Endothelial cell of umbilical vein (primary cell): ENCODE measurements at regions of chr11 and their contacts with region 1.

Region 1: DNA sequence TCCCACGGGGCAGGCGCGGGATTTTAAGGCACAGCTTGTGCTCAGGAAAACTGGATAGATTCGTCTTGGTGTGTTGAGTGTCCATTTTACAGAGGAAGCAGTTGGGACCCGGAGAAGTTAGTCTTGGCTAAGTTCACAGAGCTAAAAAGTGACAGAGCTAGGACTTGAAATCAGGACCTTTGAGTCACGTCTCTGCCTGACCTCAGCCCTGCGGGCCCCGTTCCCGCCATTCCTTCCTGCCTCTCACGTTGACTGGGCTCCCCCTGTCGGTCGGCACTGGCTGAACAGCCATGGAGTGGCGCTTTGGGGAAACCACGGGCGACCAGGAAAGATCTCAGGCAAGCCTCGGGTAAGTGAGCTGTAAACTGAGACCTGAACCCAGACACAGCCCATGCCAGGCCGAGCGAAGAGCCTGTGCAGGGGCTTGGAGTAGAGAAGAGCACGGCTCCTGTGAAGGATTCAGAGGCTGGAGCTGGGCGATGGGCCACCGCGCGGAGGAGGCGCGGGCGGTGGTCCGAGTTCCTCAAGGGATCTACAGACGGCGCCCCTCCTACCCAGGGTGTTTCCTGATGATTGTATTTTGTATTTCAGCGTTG is 54.1 kb downstream of the WNT11 start:
- DNase-seq: peak; percentile 77
- H3K4me3 ChIP-seq: peak overlapping the region in 2 of 3 experiments; percentile 25 to 27
- H3K27ac ChIP-seq: no peak overlapping the region
- H3K4me1 ChIP-seq: no peaks in the 10 kb centered on the region
- H3K27me3 ChIP-seq: no peaks in the 10 kb centered on the region
- CTCF ChIP-seq: peak; percentile 95 to 99
- POLR2A ChIP-seq: no peak

Region 2: DNA sequence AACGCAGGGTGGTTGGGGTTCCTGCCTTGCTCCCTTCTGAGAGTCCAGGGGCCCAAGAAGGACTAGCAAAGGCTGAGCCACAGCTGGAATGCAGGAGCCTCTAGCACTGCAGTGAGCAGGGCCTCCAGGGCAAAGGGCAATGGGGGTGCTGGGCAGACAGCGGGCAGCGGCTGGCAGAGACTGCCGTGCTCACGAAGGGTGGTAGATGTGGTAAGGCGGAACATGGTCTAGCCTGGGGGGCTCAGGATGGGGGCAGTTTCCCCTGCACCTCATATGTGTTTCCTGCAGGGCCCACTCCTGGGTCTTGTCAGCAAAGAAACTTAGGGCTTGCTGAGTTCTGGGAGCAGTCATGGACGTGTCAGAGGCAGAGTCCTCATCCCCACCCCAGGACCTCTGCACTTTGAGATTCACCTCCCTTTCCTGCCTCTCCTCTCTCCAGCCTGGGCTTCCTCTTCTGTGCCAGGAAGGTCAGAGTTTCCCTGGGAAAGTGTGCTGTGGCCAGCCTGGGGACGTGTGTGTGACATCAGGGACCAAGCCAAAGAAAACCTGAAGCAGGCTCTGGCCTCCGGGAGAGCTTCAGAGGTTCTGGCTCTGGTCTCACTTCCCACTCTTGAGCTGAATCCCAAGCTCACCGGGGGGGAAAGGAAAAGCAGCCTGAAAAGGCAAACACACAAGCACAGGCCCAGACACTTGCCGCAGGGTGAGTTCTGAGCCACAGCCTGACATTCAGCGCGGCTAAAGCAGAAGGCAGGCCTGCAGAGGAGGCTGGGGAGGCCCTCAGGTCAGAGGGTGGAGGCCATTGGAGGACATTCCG is 430.1 kb before region 1 on chr11:
- CTCF ChIA-PET with region 1: interaction called, 33 read pairs
- POLR2A ChIA-PET with region 1: no interaction called
- dilution Hi-C with region 1: no loop called
- intact Hi-C with region 1: loop called (anchors 2 kb)
- DNase-seq: no peak
- H3K4me3 ChIP-seq: no peak overlapping the region
- H3K27ac ChIP-seq: no peak overlapping the region
- H3K4me1 ChIP-seq: no peaks in the 10 kb centered on the region
- H3K27me3 ChIP-seq: peaks cover 0 to 2% of the 10 kb centered on the region in 2 experiments
- CTCF ChIP-seq: no peak
- POLR2A ChIP-seq: no peak

Region 3: GRCh38 chr11:75855191-75855590 is 297.0 kb before region 1 on chr11:
- CTCF ChIA-PET with region 1: no interaction called
- POLR2A ChIA-PET with region 1: no interaction called
- dilution Hi-C with region 1: no loop called
- intact Hi-C with region 1: no loop called
- DNase-seq: no peak
- H3K4me3 ChIP-seq: no peak overlapping the region
- H3K27ac ChIP-seq: no peak overlapping the region
- H3K4me1 ChIP-seq: peaks cover 20% of the 10 kb centered on the region
- H3K27me3 ChIP-seq: no peaks in the 10 kb centered on the region
- CTCF ChIP-seq: no peak
- POLR2A ChIP-seq: no peak

Region 4: GRCh38 chr11:75867775-75868374 is 284.3 kb before region 1 on chr11:
- CTCF ChIA-PET with region 1: interaction called, 20 read pairs
- POLR2A ChIA-PET with region 1: no interaction called
- dilution Hi-C with region 1: no loop called
- intact Hi-C with region 1: no loop called
- DNase-seq: peak; percentile 71
- H3K4me3 ChIP-seq: no peak overlapping the region
- H3K27ac ChIP-seq: no peak overlapping the region
- H3K4me1 ChIP-seq: peaks cover 20% of the 10 kb centered on the region
- H3K27me3 ChIP-seq: no peaks in the 10 kb centered on the region
- CTCF ChIP-seq: peak; percentile 47 to 58
- POLR2A ChIP-seq: no peak

Region 5: DNA sequence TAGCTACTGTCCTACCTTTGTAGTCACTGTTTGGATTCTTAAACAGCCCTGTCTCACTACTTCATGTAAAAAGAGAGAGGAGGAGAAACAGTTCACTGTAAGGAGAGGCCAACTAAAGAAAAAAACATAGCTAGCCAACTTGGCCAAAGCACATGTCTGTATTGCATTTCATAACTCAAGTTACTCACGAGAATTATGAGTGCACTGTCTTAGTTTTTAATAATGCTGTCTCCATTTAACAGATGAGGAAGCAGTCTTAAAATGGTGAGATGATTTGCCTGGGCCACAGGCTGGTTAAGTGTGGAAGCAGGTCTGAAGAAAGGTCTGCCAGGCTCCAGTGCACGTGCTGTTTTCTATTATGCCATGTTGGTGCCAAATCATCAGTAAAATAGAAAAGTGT is 232.7 kb before region 1 on chr11:
- CTCF ChIA-PET with region 1: interaction called, 10 read pairs
- POLR2A ChIA-PET with region 1: no interaction called
- dilution Hi-C with region 1: no loop called
- intact Hi-C with region 1: no loop called
- DNase-seq: no peak
- H3K4me3 ChIP-seq: no peak overlapping the region
- H3K27ac ChIP-seq: no peak overlapping the region
- H3K4me1 ChIP-seq: peaks cover 5% of the 10 kb centered on the region
- H3K27me3 ChIP-seq: no peaks in the 10 kb centered on the region
- CTCF ChIP-seq: no peak
- POLR2A ChIP-seq: no peak

Region 6: DNA sequence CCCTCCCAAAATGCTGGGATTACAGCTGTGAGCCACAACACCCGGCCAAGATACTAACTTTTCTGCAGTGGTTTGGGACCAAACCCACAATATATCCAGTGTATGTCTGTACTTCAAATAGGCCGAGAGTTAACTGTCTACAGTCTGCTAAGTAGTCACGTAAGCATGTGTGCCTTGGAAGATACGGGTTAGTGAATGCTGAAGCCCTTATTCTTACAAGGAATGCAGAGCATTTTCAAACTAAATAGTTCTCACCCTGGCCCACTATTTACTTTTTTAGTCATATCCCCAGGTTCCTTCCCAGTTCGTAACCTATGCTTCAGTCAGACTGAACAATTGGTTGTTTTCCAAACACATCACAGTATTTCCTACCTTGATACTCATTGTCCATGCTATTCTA is 121.9 kb before region 1 on chr11:
- CTCF ChIA-PET with region 1: interaction called, 7 read pairs
- POLR2A ChIA-PET with region 1: no interaction called
- dilution Hi-C with region 1: no loop called
- intact Hi-C with region 1: loop called (anchors 5 kb)
- DNase-seq: peak; percentile 96
- H3K4me3 ChIP-seq: peak overlapping the region in 1 of 3 experiments; percentile 20
- H3K27ac ChIP-seq: peak overlapping the region; percentile 97
- H3K4me1 ChIP-seq: peaks cover 38% of the 10 kb centered on the region
- H3K27me3 ChIP-seq: no peaks in the 10 kb centered on the region
- CTCF ChIP-seq: no peak
- POLR2A ChIP-seq: peak; percentile 60

Region 7: DNA sequence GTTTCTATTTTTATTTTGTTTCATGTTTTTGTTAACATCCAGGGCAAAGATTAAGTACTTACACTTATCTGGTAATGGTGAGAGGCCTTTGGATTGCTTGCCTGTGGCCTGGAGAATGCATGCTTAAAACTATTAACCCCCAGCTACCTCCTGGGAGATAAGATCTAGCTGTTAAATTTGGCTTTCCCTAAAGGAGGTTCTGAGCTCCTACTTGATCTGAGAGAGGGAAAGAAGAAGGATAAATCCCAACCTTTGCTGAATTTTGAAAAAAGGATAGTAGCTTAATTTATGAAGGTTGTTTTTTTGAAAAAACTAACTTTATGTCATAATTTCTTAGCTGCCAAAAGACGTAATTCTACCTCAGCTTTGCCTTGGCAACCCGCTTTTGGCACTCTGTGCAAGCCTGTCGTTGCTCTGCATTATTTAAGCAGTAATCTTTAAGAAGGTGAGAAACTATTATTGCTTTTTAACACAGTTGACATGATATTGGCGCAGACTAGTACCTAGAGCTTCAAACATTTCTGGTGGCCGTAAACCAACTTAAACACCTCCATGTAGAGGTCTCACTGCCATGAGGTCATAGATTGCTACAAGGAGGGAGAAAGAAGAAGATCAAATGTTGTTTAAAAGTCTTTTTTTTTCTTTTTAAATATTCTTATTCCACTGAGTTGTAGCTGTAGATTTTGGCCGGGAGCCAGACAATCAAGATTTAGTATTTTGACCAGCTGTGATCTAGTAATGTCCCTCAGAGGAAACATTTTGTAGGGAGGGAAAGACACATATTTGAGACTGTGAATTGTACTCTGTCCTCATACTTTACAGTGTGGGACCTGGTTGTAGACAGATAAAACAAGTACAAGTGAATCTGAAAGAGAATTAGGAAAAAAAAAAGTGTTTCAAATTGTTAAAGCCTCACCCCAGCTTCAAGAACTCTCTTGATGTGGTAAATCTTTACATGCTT is 20.2 kb before region 1 on chr11:
- CTCF ChIA-PET with region 1: interaction called, 21 read pairs
- POLR2A ChIA-PET with region 1: no interaction called
- dilution Hi-C with region 1: no loop called
- intact Hi-C with region 1: no loop called
- DNase-seq: peak; percentile 56
- H3K4me3 ChIP-seq: no peak overlapping the region
- H3K27ac ChIP-seq: no peak overlapping the region
- H3K4me1 ChIP-seq: peaks cover 2% of the 10 kb centered on the region
- H3K27me3 ChIP-seq: no peaks in the 10 kb centered on the region
- CTCF ChIP-seq: no peak
- POLR2A ChIP-seq: no peak